Common myeloid progenitor, CD34-positive (primary cell): ENCODE measurements at regions of chr1 and their contacts with region 1.

Region 1: DNA sequence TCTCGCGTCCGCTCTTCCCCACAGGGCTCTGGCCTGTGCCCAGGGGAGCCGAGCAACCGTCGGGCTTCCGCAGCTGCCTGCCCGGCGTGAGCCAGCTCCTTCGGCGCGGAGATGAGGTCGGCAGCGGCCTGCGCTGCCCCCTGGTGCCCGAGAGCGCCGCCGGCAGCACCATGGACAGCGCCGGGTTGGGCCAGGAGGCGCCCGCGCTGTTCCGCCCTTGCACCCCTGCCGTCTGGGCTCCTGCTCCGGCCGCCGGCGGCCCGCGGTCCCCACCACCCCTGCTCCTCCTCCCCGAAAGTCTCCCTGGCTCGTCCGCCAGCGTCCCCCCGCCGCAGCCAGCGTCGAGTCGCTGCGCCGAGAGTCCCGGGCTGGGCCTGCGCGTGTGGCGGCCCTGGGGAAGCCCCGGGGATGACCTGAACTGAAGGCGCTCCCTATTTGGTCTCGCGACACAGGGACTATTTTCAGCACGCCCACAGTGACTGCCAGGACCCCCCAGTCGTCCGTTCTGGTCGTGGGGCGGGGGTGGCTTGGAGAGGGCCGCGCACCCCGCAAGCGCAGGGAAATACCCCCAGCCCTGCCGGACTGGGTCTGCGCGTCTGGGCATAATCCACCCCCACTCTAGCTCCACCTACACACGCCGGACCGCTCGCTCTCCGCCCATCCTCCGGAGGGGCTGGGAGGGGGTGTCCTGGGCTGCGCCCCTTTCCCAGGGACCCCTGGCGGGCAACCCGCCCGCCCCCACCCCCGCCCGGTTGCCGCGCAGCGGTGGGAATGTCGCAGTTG is 1.3 kb downstream of the HES3 start:
- DNase-seq: peak; percentile 78 to 89 (median 87)
- H3K4me3 ChIP-seq: no peak overlapping the region
- H3K27ac ChIP-seq: no peak overlapping the region
- H3K4me1 ChIP-seq: peaks cover 0 to 39% (median 25%) of the 10 kb centered on the region in 4 experiments
- H3K27me3 ChIP-seq: peaks cover 0 to 97% (median 53%) of the 10 kb centered on the region in 5 experiments

Region 2: DNA sequence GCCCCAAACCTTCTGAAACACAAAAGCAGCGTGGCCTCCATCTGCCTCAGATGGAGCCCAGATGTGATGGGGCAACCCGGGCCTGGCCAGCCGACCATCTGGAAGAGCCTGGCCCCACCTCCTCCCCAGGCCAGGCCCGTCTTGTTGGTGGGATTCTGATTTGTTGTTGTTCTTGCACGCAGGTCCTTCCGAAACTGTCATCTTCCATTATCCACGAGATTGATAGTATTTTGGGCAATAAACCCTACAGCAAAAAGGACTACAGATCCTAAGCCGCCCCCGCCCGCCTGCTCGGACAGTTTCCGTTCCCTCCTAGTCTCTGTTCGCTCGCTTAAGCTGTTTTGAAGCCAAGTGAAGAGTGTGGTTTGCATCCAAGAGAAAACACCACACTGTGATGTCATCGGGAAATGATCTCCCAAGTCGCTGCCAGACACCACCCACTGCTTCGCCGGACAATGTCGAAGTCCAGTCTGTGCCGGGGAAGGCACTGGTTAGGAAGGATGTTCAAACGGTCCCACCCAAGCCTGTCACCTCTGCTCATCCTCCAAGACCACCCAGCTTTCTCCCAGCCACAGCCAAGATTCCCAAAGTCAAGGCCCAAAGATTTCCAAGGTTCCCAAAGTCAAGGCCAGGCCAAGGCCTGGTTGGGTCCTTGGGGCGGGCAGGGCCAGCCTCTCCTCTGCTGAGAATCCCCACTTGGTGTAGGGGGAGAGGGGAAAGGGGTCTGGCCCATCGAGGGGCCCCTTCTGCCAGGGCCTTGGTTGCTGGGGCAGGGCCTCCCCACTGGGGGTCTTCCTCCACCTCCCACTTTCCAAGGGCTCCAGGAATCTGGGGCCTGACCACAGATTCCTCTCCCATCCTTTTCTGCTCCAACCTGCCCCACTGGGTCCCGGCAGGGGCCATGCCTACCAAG is 146.7 kb before region 1 on chr1:
- CTCF ChIA-PET with region 1: no interaction called
- POLR2A ChIA-PET with region 1: no interaction called
- DNase-seq: no peak
- H3K4me3 ChIP-seq: no peak overlapping the region
- H3K27ac ChIP-seq: no peak overlapping the region
- H3K4me1 ChIP-seq: peaks cover 0 to 12% (median 4%) of the 10 kb centered on the region in 4 experiments
- H3K27me3 ChIP-seq: peaks cover 0 to 7% (median 3%) of the 10 kb centered on the region in 5 experiments

Region 3: GRCh38 chr1:6205849-6206519 is 39.3 kb before region 1 on chr1 and contains the start of gene RNF207:
- CTCF ChIA-PET with region 1: interaction called, 10 read pairs
- POLR2A ChIA-PET with region 1: no interaction called
- DNase-seq: peak in 2 of 3 donors; percentile 59
- H3K4me3 ChIP-seq: peak within 1 kb of the TSS in 6 of 7 experiments; percentile 35 to 70 (median 52)
- H3K27ac ChIP-seq: peak within 1 kb of the TSS in 1 of 2 experiments; percentile 71
- H3K4me1 ChIP-seq: peaks cover 0 to 32% (median 28%) of the 10 kb centered on the region in 4 experiments
- H3K27me3 ChIP-seq: peaks cover 4 to 59% (median 16%) of the 10 kb centered on the region in 5 experiments

Region 4: DNA sequence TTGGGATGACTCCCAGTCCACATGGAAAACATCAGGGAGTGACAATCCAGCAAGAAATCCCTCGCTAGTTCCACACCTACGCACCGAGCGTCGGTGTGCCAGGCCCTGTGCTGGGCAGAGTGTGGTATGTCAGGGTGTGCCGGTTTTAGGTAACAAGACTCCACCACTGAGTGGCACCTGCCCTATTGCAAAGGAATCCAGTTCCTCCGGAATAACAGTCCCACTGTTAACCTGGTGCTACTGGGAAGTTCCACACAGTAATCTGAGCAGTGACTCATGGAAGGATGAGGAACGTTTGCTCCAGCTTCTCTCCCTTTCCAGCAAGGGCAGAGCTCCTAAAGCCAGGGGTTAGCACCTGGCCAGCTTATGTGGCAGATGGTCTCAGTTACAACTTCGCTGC is 25.0 kb before region 1 on chr1:
- CTCF ChIA-PET with region 1: no interaction called
- POLR2A ChIA-PET with region 1: no interaction called
- DNase-seq: no peak
- H3K4me3 ChIP-seq: no peak overlapping the region
- H3K27ac ChIP-seq: no peak overlapping the region
- H3K4me1 ChIP-seq: no peaks in the 10 kb centered on the region
- H3K27me3 ChIP-seq: no peaks in the 10 kb centered on the region

Region 5: DNA sequence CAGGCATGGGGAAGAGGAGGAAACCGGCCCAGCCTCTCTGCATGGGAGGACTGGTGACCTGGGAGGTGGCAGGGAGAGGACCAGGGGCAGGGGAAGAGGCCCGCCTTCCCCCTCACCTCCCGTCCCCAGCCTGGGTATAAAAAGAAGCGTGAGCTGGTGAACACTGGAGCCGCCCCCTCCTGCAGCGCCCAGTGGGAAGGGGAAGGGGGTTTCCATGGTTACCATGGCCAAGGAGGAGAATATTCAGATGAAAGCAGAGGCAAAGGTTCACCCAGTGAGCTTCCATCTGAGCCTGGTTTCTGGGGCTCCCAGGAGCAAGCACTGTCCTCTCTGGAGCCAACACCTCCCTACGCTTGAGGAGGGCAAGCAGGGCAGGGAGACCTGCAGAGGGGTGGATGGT is 93.4 kb after region 1 on chr1:
- CTCF ChIA-PET with region 1: interaction called, 113 read pairs
- POLR2A ChIA-PET with region 1: interaction called, 5 read pairs
- DNase-seq: no peak
- H3K4me3 ChIP-seq: no peak overlapping the region
- H3K27ac ChIP-seq: no peak overlapping the region
- H3K4me1 ChIP-seq: no peaks in the 10 kb centered on the region
- H3K27me3 ChIP-seq: no peaks in the 10 kb centered on the region

Region 6: DNA sequence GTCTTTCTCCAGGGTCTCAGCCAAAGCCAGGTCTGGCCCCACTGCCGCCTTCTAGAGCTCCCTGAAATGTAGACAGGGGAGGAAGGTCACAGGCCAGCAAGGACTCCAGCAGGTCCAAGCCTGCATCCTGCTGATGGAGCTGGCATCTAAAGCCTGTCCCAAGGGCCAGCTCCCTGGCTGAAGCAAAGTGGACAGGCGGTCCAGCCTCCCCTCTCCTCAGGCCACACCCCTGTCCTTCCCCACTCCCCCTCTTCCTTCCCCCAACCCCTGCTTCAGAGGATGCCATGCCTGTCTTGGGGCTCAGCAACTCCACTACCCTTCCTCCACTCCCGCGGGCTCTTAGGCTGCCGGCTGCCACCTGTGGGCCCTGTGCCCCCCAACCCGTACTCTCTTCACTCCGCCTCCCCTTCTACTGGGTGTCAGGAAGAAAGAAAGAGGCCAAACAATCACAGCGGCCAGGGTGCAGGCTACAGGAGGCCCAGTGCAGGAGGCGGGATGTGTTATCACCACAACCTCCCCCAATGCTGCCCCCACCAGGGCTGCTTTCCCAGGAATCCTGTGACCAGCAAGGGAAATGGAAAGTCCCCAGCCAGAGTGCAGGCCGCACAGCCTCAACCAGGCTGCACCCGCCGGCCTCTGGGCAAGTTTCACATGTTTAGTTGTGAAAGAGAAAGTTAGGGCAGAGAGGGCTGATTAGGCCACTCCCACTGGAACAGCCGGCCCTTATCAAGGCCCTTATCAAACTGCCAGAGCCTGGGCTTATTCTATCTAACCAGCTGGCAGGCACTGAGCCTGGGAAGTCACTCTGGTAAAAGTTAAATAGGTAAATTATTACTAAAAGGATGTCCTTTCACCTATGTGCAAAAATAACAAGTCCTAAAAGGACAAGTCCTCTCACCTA is 114.2 kb after region 1 on chr1:
- CTCF ChIA-PET with region 1: interaction called, 17 read pairs
- POLR2A ChIA-PET with region 1: no interaction called
- DNase-seq: peak; percentile 65 to 77 (median 76)
- H3K4me3 ChIP-seq: peak overlapping the region in 3 of 7 experiments; percentile 32 to 64 (median 61)
- H3K27ac ChIP-seq: peak overlapping the region; percentile 70 to 85
- H3K4me1 ChIP-seq: peaks cover 0 to 42% (median 36%) of the 10 kb centered on the region in 4 experiments
- H3K27me3 ChIP-seq: no peaks in the 10 kb centered on the region